Posterior vena cava (tissue), 2 donors: ENCODE measurements at regions of chr2 and their contacts with region 1.

Region 1: DNA sequence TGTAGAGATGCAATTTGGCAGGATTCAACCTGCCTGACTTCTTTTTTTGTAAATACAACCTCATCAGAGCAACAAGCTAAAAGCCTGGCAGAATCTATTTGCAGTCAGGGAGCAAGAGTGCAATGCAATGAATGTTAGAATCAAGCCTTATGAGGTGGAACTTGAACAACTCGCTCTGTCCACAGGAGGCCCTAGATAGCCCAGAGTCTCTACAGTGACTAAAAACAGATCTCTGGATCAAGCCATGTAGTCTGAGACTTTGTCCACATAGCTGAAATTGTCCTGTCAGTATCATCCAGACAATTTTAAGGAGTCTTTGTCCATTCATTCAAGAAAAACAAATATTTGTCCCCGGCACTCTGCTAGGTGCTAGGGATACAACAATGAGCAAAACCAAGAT is 32.0 kb upstream of the CDK5R2 start:
- DNase-seq: no peak

Region 2: DNA sequence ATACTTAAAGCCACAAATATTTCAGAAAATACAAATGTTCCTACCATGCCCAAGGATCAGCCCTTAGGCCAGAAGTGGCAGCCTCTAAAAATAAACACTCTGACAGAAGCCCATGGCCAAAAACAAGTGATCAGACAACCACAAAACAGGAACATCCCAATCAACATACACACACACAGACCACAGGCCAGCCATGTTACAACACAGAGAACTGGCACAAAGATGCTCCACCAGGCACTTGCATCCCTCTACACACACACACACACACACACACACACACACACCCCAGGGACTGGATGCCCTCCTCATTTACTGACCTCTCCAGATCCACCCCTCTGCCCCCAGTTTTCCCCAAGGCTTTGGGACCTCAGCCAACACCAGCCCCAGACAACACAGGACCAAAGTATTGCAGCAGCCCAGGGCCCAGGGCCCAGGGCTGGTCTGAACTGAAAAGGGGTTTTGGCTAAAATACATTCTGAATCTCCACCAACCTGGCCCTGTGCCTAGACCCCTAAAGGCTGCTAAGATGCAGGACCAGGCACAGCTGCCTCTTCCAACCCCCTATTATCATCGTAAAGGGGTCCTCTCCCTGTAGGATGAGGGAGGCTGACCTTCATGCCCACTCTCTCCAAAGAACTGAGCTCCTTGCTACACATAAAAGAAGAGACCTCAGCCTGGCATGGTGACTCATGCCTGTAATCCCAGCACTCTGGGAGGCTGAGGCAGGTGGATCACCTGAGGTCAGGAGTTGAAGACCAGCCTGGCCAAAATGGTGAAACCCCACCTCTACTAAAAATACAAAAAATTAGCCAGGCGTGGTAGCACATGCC is 1076.0 kb before region 1 on chr2:
- intact Hi-C with region 1: no loop called
- DNase-seq: no peak

Region 3: DNA sequence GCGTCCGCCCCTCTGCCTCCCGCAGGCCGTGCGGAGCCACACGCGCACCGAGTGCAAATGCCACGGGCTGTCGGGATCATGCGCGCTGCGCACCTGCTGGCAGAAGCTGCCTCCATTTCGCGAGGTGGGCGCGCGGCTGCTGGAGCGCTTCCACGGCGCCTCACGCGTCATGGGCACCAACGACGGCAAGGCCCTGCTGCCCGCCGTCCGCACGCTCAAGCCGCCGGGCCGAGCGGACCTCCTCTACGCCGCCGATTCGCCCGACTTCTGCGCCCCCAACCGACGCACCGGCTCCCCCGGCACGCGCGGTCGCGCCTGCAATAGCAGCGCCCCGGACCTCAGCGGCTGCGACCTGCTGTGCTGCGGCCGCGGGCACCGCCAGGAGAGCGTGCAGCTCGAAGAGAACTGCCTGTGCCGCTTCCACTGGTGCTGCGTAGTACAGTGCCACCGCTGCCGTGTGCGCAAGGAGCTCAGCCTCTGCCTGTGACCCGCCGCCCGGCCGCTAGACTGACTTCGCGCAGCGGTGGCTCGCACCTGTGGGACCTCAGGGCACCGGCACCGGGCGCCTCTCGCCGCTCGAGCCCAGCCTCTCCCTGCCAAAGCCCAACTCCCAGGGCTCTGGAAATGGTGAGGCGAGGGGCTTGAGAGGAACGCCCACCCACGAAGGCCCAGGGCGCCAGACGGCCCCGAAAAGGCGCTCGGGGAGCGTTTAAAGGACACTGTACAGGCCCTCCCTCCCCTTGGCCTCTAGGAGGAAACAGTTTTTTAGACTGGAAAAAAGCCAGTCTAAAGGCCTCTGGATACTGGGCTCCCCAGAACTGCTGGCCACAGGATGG is 53.8 kb before region 1 on chr2:
- intact Hi-C with region 1: loop called in 1 of 2 experiments (anchors 2 kb)
- DNase-seq: no peak

Region 4: DNA sequence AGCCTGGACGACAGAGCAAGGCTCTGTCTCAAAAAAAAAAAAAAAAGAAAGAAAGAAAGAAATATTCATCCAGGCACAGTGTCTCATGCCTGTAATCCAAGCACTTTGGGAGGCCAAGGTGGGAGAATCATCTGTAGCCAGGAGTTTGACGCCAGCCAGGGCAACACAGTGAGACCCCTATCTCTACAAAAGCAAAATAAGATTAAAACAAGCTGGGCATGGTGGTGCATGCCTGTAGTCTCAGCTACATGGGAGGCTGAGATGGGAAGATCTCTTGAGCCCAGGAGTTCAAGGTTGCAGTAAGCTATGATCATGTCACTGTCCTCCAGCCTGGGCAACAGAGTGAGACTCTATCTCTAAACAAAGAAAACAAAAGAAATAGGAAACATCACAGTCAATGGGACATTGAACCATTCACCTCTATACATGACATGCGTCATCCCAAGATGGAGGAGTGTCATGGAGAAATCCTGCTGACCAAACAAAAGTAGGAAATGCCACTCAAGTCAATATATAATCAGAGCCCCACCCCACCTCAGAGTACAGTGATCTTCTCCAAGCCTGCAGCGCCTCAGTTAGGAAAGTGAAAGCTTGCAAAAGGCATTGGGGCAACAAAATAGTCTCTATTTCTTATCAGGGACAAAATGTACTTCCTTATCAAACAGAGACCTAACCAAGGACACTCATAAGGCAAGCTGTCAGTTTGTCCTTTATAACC is 47.8 kb after region 1 on chr2:
- intact Hi-C with region 1: no loop called
- DNase-seq: no peak